ENCODE measurements at regions of chr14 and their contacts with region 1.

Region 1: DNA sequence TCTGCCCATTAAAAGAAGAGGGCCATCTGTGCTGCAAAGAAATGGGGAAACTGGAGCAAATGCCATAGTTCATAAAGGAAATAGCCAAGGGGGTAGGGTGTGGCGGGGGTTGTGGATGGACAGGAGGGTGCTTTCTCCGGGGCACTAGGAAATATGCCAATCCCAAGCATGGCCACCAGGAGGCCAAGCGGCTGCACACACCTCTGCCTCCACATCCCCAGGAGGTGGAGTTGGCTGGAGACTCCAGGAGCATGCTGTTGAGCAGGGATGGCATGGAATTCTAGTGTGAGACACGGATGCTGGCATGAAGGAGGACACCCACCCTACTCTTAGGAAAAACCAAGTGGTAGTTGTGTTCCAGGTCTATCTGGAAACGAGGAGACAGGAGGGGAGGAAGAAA is 25.2 kb downstream of the NID2 start:
- DNase-seq: peak; percentile 21
- ATAC-seq: peak; percentile 98
- H3K4me3 ChIP-seq: no peak overlapping the region
- H3K27ac ChIP-seq: no peak overlapping the region
- H3K4me1 ChIP-seq: no peaks in the 10 kb centered on the region
- H3K27me3 ChIP-seq: peaks cover 2 to 27% of the 10 kb centered on the region in 2 experiments; a peak in 3 of 5 replicates
- CTCF ChIP-seq: peak; percentile 63
- EP300 ChIP-seq: no peak
- POLR2A ChIP-seq: no peak
- RAD21 ChIP-seq: peak; percentile 32; the same call in 1 of the 2 replicates

Region 2: DNA sequence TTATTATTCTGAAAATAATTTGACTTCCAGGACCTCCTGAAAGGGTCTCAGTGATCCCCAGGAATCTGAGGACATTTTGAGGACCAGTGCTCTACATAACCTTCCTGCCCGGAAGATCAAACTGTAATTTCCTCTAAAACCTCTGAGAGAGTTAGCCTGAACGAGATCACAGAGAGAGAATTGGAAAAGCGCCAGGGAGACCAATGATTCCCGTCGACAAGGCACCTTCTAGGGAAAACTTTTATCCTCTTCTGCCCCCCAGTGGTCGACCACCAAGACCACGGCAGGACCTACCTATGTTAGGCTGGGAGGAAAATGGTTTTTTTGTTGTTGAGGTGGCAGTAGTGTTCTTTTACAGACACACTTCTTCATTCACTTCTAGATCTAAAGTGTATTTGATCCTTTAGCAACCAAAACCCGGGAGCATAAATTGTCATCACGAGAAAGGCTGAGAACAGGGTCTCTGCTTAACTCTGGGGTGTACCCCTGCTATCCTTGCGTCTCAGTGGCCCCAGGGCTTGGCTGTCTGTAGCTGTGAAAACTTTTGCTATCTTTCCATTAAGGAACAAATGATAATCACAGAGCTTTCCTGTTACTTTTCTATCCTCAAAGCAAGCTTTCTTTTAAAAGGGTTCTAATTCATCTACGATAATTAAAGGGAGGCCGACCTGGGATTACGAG is 88.1 kb after region 1 on chr14:
- CTCF ChIA-PET with region 1: interaction called, 23 read pairs
- POLR2A ChIA-PET with region 1: no interaction called
- in situ Hi-C with region 1: loop called (anchors 5 kb)
- intact Hi-C with region 1: loop called (anchors 1 kb)
- DNase-seq: peak; percentile 80
- ATAC-seq: peak; percentile 94
- H3K4me3 ChIP-seq: no peak overlapping the region
- H3K27ac ChIP-seq: no peak overlapping the region
- H3K4me1 ChIP-seq: no peaks in the 10 kb centered on the region
- H3K27me3 ChIP-seq: 0 out of 5 replicates have a peak, but pooled peaks cover 0 to 2% of the 10 kb centered on the region in 2 experiments
- CTCF ChIP-seq: peak; percentile 86
- EP300 ChIP-seq: no peak
- POLR2A ChIP-seq: no peak
- RAD21 ChIP-seq: peak; percentile 74

Region 3: GRCh38 chr14:52235866-52236510 is 192.3 kb after region 1 on chr14:
- CTCF ChIA-PET with region 1: no interaction called
- POLR2A ChIA-PET with region 1: no interaction called
- in situ Hi-C with region 1: no loop called
- intact Hi-C with region 1: no loop called
- DNase-seq: no peak
- ATAC-seq: no peak
- H3K4me3 ChIP-seq: no peak overlapping the region
- H3K27ac ChIP-seq: no peak overlapping the region
- H3K4me1 ChIP-seq: no peaks in the 10 kb centered on the region
- H3K27me3 ChIP-seq: no peaks in the 10 kb centered on the region; a peak in 3 of 5 replicates
- CTCF ChIP-seq: no peak
- EP300 ChIP-seq: no peak
- POLR2A ChIP-seq: no peak
- RAD21 ChIP-seq: no peak